ENCODE measurements at regions of chr19 and their contacts with region 1.

Region 1: GRCh38 chr19:32339988-32340874 is 5.2 kb upstream of the ZNF507 start:
- DNase-seq: peak; percentile 28 to 51 (median 43)
- H3K4me3 ChIP-seq: no peak overlapping the region
- H3K27ac ChIP-seq: no peak overlapping the region
- H3K4me1 ChIP-seq: no peaks in the 10 kb centered on the region
- H3K27me3 ChIP-seq: peaks cover 0 to 13% (median 4%) of the 10 kb centered on the region in 5 experiments

Region 2: GRCh38 chr19:32357720-32358119 is 17.5 kb after region 1 on chr19:
- CTCF ChIA-PET with region 1: interaction called, 16 read pairs
- POLR2A ChIA-PET with region 1: interaction called, 3 read pairs
- DNase-seq: no peak
- H3K4me3 ChIP-seq: no peak overlapping the region
- H3K27ac ChIP-seq: no peak overlapping the region
- H3K4me1 ChIP-seq: no peaks in the 10 kb centered on the region
- H3K27me3 ChIP-seq: no peaks in the 10 kb centered on the region

Region 3: GRCh38 chr19:32367948-32368536 is 27.8 kb after region 1 on chr19:
- CTCF ChIA-PET with region 1: interaction called, 15 read pairs
- POLR2A ChIA-PET with region 1: no interaction called
- DNase-seq: no peak
- H3K4me3 ChIP-seq: no peak overlapping the region
- H3K27ac ChIP-seq: no peak overlapping the region
- H3K4me1 ChIP-seq: peaks cover 0 to 2% (median 0%) of the 10 kb centered on the region in 4 experiments
- H3K27me3 ChIP-seq: no peaks in the 10 kb centered on the region

Region 4: GRCh38 chr19:32570081-32570785 is 230.0 kb after region 1 on chr19:
- CTCF ChIA-PET with region 1: interaction called, 18 read pairs
- POLR2A ChIA-PET with region 1: no interaction called
- DNase-seq: peak; percentile 63 to 83 (median 76)
- H3K4me3 ChIP-seq: no peak overlapping the region
- H3K27ac ChIP-seq: no peak overlapping the region
- H3K4me1 ChIP-seq: peaks cover 0 to 2% (median 0%) of the 10 kb centered on the region in 4 experiments
- H3K27me3 ChIP-seq: peaks cover 0 to 8% (median 3%) of the 10 kb centered on the region in 5 experiments

Measured in common myeloid progenitor, CD34-positive (primary cell).